Activated T-helper 2 cell treated with anti-CD3 and anti-CD28 coated beads, Interferon-gamma antibody, Interleukin-2, Interleukin-4, amounts not matched to agents 10 μg/mL and 5 μg/mL and 100 μg/mL, durations not matched to agents 14 hours and 24 hours and 36 hours (primary cell): ENCODE measurements at regions of chr10 and their contacts with region 1.

Region 1: GRCh38 chr10:106189292-106189691 is 975.2 kb downstream of the SORCS1 start:
- DNase-seq: no peak
- H3K4me3 Mint-ChIP-seq: no peak overlapping the region
- H3K27ac Mint-ChIP-seq: no peak overlapping the region
- H3K4me1 Mint-ChIP-seq: no peaks in the 10 kb centered on the region
- H3K27me3 Mint-ChIP-seq: no peaks in the 10 kb centered on the region

Region 2: DNA sequence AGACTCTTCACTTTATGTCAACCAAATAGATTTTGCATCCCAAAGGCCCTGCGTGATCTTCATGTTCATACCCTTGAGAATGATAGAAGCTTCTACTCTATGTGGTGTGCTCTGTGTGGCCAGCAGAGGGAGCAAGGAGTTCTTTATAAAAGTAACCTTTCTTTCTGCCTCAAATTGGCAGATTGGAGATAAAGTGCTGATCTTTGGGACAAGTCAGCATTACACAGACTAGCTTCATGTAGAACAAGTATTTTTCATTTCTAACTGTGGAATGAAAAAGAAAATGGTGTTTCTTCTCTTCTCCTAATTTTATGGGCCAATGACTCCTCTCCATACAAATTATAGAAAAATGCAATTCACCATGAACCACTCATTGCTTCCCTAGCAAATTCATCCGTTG is 238.9 kb before region 1 on chr10:
- intact Hi-C with region 1: loop called (anchors 2 kb)
- DNase-seq: no peak
- H3K4me3 Mint-ChIP-seq: no peak overlapping the region
- H3K27ac Mint-ChIP-seq: no peak overlapping the region
- H3K4me1 Mint-ChIP-seq: no peaks in the 10 kb centered on the region
- H3K27me3 Mint-ChIP-seq: no peaks in the 10 kb centered on the region

Region 3: GRCh38 chr10:105986912-105987635 is 202.2 kb before region 1 on chr10:
- intact Hi-C with region 1: no loop called
- DNase-seq: no peak
- H3K4me3 Mint-ChIP-seq: no peak overlapping the region
- H3K27ac Mint-ChIP-seq: no peak overlapping the region
- H3K4me1 Mint-ChIP-seq: no peaks in the 10 kb centered on the region
- H3K27me3 Mint-ChIP-seq: no peaks in the 10 kb centered on the region

Region 4: GRCh38 chr10:106513352-106513771 is 324.1 kb after region 1 on chr10:
- intact Hi-C with region 1: no loop called
- DNase-seq: no peak
- H3K4me3 Mint-ChIP-seq: no peak overlapping the region
- H3K27ac Mint-ChIP-seq: no peak overlapping the region
- H3K4me1 Mint-ChIP-seq: no peaks in the 10 kb centered on the region
- H3K27me3 Mint-ChIP-seq: no peaks in the 10 kb centered on the region